ENCODE measurements at regions of chr4 and their contacts with region 1.

Region 1: GRCh38 chr4:41661442-41662076 is 87.0 kb downstream of the PHOX2B start:
- DNase-seq: peak; percentile 34 to 75
- H3K4me3 ChIP-seq: no peak overlapping the region
- H3K4me1 ChIP-seq: peaks cover 10% of the 10 kb centered on the region
- H3K27me3 ChIP-seq: no peaks in the 10 kb centered on the region

Region 2: GRCh38 chr4:40908702-40909362 is 752.7 kb before region 1 on chr4:
- in situ Hi-C with region 1: loop called (anchors 25 kb)
- DNase-seq: peak; percentile 80 to 90
- H3K4me3 ChIP-seq: no peak overlapping the region
- H3K4me1 ChIP-seq: peaks cover 7% of the 10 kb centered on the region
- H3K27me3 ChIP-seq: no peaks in the 10 kb centered on the region

Region 3: GRCh38 chr4:41281038-41281634 is 380.4 kb before region 1 on chr4:
- in situ Hi-C with region 1: loop called (anchors 10 kb)
- DNase-seq: peak; percentile 78 to 87
- H3K4me3 ChIP-seq: no peak overlapping the region
- H3K4me1 ChIP-seq: peaks cover 16% of the 10 kb centered on the region
- H3K27me3 ChIP-seq: no peaks in the 10 kb centered on the region